ENCODE measurements at regions of chr7 and their contacts with region 1.

Region 1: DNA sequence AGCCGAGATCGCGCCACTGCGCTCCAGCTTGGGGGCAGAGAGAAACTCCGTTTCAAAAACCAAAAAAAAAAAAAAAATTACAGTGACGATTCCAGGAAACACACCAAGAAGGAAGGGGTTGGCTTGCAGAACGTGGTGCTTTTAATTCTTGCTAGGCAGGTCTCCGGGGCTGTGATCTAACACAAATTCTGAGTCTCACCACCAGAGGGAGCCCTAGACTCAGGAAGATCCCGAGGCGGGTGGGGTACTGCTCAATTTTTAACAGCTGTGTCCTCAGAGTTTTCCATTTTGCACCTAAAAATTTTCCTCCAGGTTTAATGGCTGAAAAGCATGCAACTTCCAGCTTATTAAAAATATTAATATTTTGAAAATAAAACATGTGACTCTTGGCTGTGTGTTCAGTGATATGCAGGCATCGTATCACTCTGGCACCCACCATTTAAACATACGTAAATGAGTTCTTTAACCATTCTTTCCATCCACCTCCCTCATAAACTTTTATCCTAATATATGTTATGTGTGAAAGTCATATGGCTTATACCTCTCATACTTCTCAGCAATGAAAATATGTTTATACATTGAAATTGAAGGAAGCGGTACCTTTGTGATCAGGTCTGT is 26.5 kb upstream of the NUB1 start:
- DNase-seq: no peak

Region 2: DNA sequence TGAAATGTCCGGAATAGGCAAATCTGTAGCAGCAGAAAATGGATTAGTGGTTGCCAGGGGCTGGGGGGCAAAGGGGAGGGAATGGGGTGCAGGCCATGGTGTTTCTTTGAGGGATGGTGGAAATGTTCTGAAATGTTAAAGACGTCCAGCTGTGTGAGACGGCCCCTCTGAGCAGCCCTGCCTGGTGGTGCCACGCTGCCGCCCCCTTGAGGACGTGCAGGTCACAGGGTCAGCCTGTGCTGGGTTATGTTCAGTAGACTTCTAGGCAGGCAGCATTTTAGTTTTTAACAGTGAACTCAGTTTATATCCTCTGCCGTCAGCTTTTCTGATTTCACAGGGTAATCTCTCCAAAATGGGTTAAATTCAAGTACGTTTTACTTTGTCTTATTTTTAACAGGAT is 35.9 kb after region 1 on chr7:
- intact Hi-C with region 1: loop called (anchors 5 kb)
- DNase-seq: peak; percentile 74

Measured in posterior vena cava (tissue), 2 donors.